Head of caudate nucleus (tissue), 42 donors: ENCODE measurements at regions of chr5 and their contacts with region 1.

Region 1: DNA sequence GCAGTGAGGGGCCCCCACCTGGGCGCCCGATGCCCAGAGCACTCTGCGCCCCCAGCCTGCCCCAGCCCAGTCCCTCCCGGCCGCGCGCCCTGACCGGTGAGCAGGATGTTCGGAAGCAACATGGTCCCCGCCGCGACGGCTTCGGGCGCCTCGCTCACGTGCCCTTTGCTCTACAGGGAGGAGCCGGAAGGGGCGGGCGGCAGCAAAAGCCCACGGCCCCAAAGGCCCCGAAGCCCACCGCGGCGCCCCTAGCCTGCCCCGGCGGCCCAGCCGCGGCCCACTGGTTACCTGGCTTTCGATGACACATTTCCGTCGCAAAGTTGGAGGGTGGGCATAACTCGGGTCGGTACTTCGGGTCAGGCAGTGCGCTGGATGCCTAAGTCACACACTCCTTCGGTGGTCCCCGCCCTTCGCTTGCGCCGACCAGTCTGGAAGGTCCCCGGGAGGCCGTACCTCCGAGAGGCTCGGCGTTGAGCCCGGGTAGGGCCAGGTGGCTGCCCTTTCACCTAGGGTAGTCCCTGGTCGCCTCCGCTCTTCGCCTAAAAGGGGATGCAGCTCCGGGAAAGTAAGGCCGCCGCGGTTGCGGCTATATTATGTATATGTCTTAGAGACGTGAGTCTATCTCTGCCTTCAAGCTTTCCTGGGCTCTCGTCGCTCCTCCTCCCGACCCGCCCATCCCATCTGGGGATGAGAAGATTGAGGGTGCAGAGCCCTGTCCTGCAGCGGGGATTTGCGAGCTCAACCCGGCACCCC is at the starts of genes AK6, RAD17 and TAF9:
- DNase-seq: peak; percentile 91 to 98 (median 95)

Region 2: DNA sequence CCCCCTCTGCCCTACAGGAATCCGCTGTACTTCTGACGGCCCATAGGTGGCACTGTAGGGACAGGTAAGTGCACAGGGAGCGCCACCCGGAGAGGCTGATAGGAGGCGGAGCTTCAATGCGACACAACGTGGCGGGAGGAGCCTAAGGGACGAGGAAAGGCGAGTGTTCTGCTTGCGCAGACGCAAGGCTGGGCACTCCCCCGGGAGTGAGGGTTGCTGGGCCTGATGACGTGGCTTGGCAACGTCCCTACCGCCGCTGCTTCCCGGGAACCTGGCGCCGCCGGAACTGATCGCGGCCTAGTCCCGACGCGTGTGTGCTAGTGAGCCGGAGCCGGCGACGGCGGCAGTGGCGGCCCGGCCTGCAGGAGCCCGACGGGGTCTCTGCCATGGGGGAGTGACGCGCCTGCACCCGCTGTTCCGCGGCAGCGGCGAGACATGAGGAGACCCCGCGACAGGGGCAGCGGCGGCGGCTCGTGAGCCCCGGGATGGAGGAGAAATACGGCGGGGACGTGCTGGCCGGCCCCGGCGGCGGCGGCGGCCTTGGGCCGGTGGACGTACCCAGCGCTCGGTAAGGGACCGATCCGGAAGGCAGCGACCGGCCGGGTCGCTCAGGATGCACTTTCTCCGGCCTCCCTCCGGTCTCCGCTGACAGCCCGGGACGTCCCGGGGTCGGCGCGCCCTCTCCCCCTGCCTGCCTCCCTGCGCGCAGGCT is 275.6 kb before region 1 on chr5 and contains the start of gene SLC30A5:
- intact Hi-C with region 1: loop called (anchors 10 kb)
- DNase-seq: peak; percentile 95 to 100 (median 99)

Region 3: GRCh38 chr5:69414885-69415583 is 45.5 kb after region 1 on chr5 and contains the start of gene MARVELD2:
- intact Hi-C with region 1: no loop called
- DNase-seq: peak; percentile 7 to 75 (median 42)